WTC11 (cell line): ENCODE measurements at regions of chr9 and their contacts with region 1.

Region 1: DNA sequence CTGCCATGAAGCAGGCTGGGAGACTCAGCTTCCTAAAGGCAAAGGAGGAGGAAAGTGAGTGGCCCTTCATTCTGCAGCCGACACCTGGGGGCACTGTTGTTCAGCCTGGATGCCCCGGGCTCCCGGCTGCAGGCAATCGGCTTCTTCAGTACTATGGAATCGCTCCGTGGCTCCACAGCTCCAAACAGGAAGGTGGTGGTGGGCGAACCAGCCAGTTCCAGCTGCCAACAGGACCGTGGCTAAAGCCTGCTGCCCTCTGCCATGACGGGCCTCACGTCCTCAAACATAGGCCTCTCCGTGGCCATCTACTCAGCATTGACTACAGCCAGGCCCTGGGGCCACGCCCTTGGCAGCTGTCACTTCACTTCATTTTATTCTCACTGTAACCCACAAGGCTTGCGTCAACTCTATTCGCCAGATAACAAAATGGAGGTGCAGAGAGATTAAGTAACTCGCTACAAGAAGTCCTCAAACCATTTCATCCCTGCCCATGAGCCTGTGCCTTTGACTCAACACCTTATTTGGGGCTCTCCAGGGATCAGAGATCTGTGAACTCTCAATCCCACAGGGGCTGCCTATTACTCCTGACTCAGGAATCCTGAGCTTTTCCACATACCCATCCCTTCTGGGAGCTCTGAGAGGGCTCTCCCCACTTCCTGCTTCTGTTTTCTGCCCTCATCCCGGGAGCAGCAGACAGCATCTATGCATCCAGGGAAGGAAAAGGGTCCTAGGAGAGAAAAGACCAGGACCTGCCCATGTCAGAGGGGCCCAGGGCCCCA is 38.0 kb downstream of the PAX5 start:
- DNase-seq: peak; percentile 88
- ATAC-seq: peak; percentile 88
- H3K4me3 Mint-ChIP-seq: peak overlapping the region; percentile 37
- H3K27ac Mint-ChIP-seq: no peak overlapping the region
- H3K4me1 Mint-ChIP-seq: peaks cover 21% of the 10 kb centered on the region
- H3K27me3 Mint-ChIP-seq: peaks cover 43% of the 10 kb centered on the region
- CTCF ChIP-seq: peak; percentile 45; the same call in 1 of the 2 replicates

Region 2: GRCh38 chr9:36862206-36863145 is 133.6 kb before region 1 on chr9:
- CTCF ChIA-PET with region 1: interaction called, 27 read pairs
- POLR2A ChIA-PET with region 1: no interaction called
- DNase-seq: peak; percentile 74
- ATAC-seq: peak; percentile 62
- H3K4me3 Mint-ChIP-seq: no peak overlapping the region
- H3K27ac Mint-ChIP-seq: no peak overlapping the region
- H3K4me1 Mint-ChIP-seq: peaks cover 22% of the 10 kb centered on the region
- H3K27me3 Mint-ChIP-seq: peaks cover 40% of the 10 kb centered on the region
- CTCF ChIP-seq: peak; percentile 44

Region 3: DNA sequence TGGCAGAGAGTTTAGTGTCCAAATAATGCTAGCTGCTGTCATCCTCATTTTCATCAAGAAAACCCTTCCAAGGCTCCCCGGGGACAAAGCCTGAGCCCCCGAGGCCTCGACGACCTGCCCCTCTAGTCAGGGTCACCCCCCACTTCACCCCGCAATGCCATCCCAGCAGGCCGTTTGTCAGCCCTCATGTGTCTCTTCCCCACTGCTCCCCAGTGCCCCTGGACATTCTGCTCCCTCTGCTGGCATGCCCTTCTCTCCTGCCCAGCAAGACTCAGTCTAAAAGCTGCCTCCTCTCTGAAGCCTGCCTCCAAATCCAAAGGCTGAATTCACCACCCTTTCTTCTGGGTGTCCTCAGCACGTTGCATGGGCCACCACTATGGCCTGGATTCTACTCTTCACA is 21.4 kb before region 1 on chr9:
- CTCF ChIA-PET with region 1: interaction called, 57 read pairs
- POLR2A ChIA-PET with region 1: interaction called, 3 read pairs
- DNase-seq: no peak
- ATAC-seq: peak; percentile 58
- H3K4me3 Mint-ChIP-seq: no peak overlapping the region
- H3K27ac Mint-ChIP-seq: no peak overlapping the region
- H3K4me1 Mint-ChIP-seq: peaks cover 3% of the 10 kb centered on the region
- H3K27me3 Mint-ChIP-seq: no peaks in the 10 kb centered on the region
- CTCF ChIP-seq: no peak

Region 4: GRCh38 chr9:37036776-37037502 is 40.8 kb after region 1 on chr9:
- CTCF ChIA-PET with region 1: interaction called, 15 read pairs
- POLR2A ChIA-PET with region 1: no interaction called
- DNase-seq: peak; percentile 59
- ATAC-seq: peak; percentile 22
- H3K4me3 Mint-ChIP-seq: peak overlapping the region; percentile 74
- H3K27ac Mint-ChIP-seq: no peak overlapping the region
- H3K4me1 Mint-ChIP-seq: peaks cover 50% of the 10 kb centered on the region
- H3K27me3 Mint-ChIP-seq: peaks cover 98% of the 10 kb centered on the region
- CTCF ChIP-seq: no peak

Region 5: GRCh38 chr9:37104183-37104889 is 108.2 kb after region 1 on chr9:
- CTCF ChIA-PET with region 1: no interaction called
- POLR2A ChIA-PET with region 1: no interaction called
- DNase-seq: no peak
- ATAC-seq: no peak
- H3K4me3 Mint-ChIP-seq: no peak overlapping the region
- H3K27ac Mint-ChIP-seq: no peak overlapping the region; the same call in 1 of the 2 replicates
- H3K4me1 Mint-ChIP-seq: peaks cover 10% of the 10 kb centered on the region
- H3K27me3 Mint-ChIP-seq: no peaks in the 10 kb centered on the region
- CTCF ChIP-seq: no peak

Region 6: GRCh38 chr9:37262410-37262809 is 266.3 kb after region 1 on chr9:
- CTCF ChIA-PET with region 1: interaction called, 37 read pairs
- POLR2A ChIA-PET with region 1: no interaction called
- DNase-seq: peak; percentile 38
- ATAC-seq: peak; percentile 57; the same call in 1 of the 2 replicates
- H3K4me3 Mint-ChIP-seq: no peak overlapping the region
- H3K27ac Mint-ChIP-seq: no peak overlapping the region
- H3K4me1 Mint-ChIP-seq: peaks cover 37% of the 10 kb centered on the region
- H3K27me3 Mint-ChIP-seq: no peaks in the 10 kb centered on the region
- CTCF ChIP-seq: no peak

Region 7: DNA sequence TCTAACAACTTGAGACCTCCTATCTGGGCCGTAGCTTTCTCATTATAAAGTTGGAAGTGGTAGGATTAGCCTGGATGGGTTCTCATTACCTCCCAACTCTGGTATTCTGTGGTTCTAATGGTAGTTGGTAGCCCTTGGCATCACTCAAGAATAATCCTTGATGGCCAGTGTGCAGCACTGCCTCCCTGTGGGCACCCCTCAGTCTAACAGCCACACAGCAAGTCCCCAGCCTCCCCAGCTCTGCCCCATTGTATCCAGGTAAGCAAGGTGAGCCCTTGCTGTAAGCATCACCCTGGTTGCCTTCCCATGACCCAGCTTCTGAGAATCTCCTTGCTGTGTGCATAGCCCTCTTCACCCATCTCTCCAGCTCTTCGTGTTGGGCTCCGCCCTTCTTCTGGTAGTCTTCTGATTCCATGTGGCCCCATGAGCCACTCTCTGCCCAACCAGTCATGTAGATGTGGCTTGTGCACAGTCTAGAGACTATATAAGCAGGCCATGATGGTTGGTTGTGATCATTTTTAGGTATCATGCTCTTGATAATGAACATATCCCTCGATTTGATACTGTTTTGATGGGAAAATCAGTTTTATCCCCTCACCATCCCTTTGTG is 368.7 kb after region 1 on chr9:
- CTCF ChIA-PET with region 1: interaction called, 23 read pairs
- POLR2A ChIA-PET with region 1: no interaction called
- DNase-seq: peak; percentile 49
- ATAC-seq: peak; percentile 93
- H3K4me3 Mint-ChIP-seq: no peak overlapping the region
- H3K27ac Mint-ChIP-seq: no peak overlapping the region
- H3K4me1 Mint-ChIP-seq: no peaks in the 10 kb centered on the region
- H3K27me3 Mint-ChIP-seq: no peaks in the 10 kb centered on the region
- CTCF ChIP-seq: 0 out of 2 replicates have a peak, but pooled peaks have one; percentile 10